Activated CD8-positive, alpha-beta T cell treated with anti-CD3 and anti-CD28 coated beads for 36 hours (primary cell): ENCODE measurements at regions of chrX and their contacts with region 1.

Region 1: GRCh38 chrX:45769761-45770582 is 569.3 kb upstream of the DIPK2B start:
- DNase-seq: peak; percentile 61
- ATAC-seq: peak; percentile 70
- H3K4me3 Mint-ChIP-seq: peak overlapping the region; percentile 84
- H3K27ac Mint-ChIP-seq: peak overlapping the region; percentile 90
- H3K4me1 Mint-ChIP-seq: peaks cover 51% of the 10 kb centered on the region
- H3K27me3 Mint-ChIP-seq: no peaks in the 10 kb centered on the region
- CTCF ChIP-seq: no peak

Region 2: GRCh38 chrX:45710081-45710801 is 59.7 kb before region 1 on chrX:
- CTCF ChIA-PET with region 1: interaction called, 4 read pairs
- POLR2A ChIA-PET with region 1: interaction called, 15 read pairs
- intact Hi-C with region 1: no loop called
- DNase-seq: peak; percentile 80
- ATAC-seq: peak; percentile 91
- H3K4me3 Mint-ChIP-seq: no peak overlapping the region
- H3K27ac Mint-ChIP-seq: peak overlapping the region; percentile 80
- H3K4me1 Mint-ChIP-seq: peaks cover 59% of the 10 kb centered on the region
- H3K27me3 Mint-ChIP-seq: no peaks in the 10 kb centered on the region
- CTCF ChIP-seq: no peak

Region 3: DNA sequence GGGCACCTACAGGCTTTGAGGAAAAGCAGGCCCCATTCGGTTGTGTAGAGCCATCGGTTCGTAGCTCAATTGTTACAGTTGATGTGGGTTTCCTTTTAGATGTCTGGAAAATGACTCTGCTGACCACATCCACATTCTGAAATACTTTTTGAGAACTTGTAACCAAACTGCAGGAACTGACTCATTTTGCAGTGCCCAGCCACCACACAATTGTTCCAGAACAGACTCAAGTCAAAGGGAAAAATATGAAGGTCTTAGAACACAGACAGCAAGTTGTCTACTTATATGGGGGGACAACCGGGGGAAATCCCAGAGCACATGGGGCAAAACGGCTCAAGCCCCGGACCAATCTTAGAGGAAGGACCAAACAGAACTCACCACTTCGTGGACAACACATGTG is 11.7 kb before region 1 on chrX:
- CTCF ChIA-PET with region 1: no interaction called
- POLR2A ChIA-PET with region 1: interaction called, 43 read pairs
- intact Hi-C with region 1: no loop called
- DNase-seq: peak; percentile 75
- ATAC-seq: peak; percentile 45
- H3K4me3 Mint-ChIP-seq: peak overlapping the region; percentile 77
- H3K27ac Mint-ChIP-seq: peak overlapping the region; percentile 99
- H3K4me1 Mint-ChIP-seq: peaks cover 71% of the 10 kb centered on the region
- H3K27me3 Mint-ChIP-seq: no peaks in the 10 kb centered on the region
- CTCF ChIP-seq: no peak

Region 4: DNA sequence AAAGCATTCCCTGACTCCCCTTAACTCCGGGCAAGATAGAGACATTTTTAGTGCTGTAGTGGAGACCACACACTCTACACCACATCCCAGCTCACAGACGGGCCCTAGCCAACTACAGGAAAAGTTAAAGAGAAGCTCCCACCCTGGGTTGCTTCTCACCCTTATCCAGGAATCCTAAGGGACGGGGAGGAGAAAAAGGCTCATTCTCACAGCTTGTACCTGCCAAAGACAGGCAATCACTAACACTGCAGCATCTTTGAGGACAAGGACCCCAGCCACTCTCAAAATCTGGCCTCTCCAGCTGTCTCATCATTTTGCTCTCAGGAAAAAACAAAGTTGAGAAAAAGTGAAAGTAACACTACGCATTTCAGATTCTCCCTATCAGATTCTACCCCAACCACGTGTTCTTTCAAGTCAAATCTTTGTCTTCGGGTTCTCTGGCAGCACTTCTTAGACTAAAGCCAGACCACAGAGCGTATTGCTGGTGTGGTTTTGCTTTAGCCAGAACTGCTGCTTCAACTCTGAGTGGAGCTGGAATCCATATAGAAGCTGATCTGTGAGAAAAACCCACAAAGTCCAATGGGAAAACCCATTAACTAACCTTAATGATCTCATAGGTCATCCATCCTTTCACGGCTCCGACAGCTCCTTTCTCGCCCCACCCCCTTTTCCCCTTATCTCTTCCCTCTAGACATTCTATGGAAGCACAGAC is 36.6 kb after region 1 on chrX:
- CTCF ChIA-PET with region 1: interaction called, 5 read pairs
- POLR2A ChIA-PET with region 1: interaction called, 54 read pairs
- intact Hi-C with region 1: loop called (anchors 5 kb)
- DNase-seq: peak; percentile 67
- ATAC-seq: peak; percentile 66
- H3K4me3 Mint-ChIP-seq: peak overlapping the region; percentile 60
- H3K27ac Mint-ChIP-seq: peak overlapping the region; percentile 92
- H3K4me1 Mint-ChIP-seq: peaks cover 86% of the 10 kb centered on the region
- H3K27me3 Mint-ChIP-seq: no peaks in the 10 kb centered on the region
- CTCF ChIP-seq: no peak

Region 5: DNA sequence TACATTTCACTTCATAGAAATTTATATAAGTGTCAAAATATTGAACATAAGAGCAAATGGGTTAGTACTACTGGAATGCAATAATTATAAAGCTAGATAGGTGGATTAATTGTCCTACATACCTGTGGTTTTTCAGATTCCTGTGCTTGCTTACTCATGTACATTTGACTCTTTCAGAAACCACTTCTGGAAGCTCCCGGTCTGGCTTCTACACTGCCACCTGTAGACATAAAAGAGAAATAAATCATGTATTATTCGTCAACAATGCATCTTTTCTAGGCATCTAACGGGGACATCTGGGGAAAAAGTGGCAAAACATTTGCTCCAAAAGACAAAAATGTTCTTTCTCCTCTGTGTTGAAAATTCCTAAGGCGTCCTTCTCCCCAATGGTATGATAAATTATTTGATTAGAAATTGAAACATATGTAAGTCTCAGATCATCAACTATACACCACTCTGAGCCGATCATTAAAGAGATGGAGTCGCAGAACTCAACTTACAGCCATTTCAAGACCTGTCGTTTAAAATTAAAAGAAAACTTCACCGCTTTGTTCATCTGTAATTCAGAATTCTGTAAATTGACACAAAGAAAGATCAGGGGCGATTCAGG is 79.4 kb after region 1 on chrX:
- CTCF ChIA-PET with region 1: interaction called, 3 read pairs
- POLR2A ChIA-PET with region 1: interaction called, 54 read pairs
- intact Hi-C with region 1: no loop called
- DNase-seq: peak; percentile 40
- ATAC-seq: no peak
- H3K4me3 Mint-ChIP-seq: peak overlapping the region; percentile 92
- H3K27ac Mint-ChIP-seq: peak overlapping the region; percentile 91
- H3K4me1 Mint-ChIP-seq: peaks cover 40% of the 10 kb centered on the region
- H3K27me3 Mint-ChIP-seq: no peaks in the 10 kb centered on the region
- CTCF ChIP-seq: peak; percentile 27